ENCODE measurements at regions of chr17 and their contacts with region 1.

Region 1: DNA sequence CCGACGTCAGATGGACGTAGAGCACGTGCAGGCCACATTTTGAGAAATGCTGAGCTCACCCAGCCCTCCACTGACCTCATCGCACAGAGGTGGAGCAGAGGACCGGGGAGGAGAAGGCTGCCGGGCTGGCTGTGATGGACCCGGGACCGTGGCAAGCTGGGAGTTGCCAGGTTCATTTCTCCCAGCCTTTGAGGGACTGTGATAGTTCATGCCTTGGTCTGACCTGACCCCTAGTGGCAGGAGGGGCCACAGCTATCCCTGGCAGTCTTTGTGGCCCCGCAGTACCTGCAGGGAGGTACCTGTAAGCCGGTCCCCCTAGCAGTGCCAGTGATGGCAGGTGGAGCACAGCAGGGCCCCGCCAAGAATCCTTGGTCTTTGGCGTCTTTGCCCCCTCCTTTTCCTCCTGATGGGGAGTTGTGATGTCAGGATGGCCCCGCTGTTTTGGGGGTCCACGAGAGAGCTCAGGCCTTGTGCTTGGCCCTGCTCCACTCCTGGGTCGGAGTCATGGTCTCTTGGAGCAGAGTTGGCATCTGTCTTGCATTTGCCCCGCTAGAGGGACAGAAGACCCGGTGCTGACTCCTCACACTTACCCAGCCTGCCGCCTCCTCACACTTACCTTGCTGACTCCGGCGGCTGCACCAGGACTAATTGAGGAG is 50.4 kb downstream of the OR1D5 start:
- DNase-seq: peak; percentile 58
- ATAC-seq: peak; percentile 98
- H3K4me3 Mint-ChIP-seq: no peak overlapping the region
- H3K27ac Mint-ChIP-seq: no peak overlapping the region
- H3K4me1 Mint-ChIP-seq: no peaks in the 10 kb centered on the region
- H3K27me3 Mint-ChIP-seq: no peaks in the 10 kb centered on the region
- CTCF ChIP-seq: peak; percentile 87

Region 2: GRCh38 chr17:2416010-2416734 is 596.9 kb before region 1 on chr17:
- CTCF ChIA-PET with region 1: interaction called, 9 read pairs
- POLR2A ChIA-PET with region 1: no interaction called
- intact Hi-C with region 1: loop called (anchors 1 kb)
- DNase-seq: peak; percentile 84
- ATAC-seq: peak; percentile 83
- H3K4me3 Mint-ChIP-seq: no peak overlapping the region
- H3K27ac Mint-ChIP-seq: no peak overlapping the region
- H3K4me1 Mint-ChIP-seq: no peaks in the 10 kb centered on the region
- H3K27me3 Mint-ChIP-seq: no peaks in the 10 kb centered on the region
- CTCF ChIP-seq: peak; percentile 47

Region 3: GRCh38 chr17:2828397-2829038 is 184.5 kb before region 1 on chr17:
- CTCF ChIA-PET with region 1: interaction called, 66 read pairs
- POLR2A ChIA-PET with region 1: interaction called, 4 read pairs
- intact Hi-C with region 1: loop called (anchors 1 kb)
- DNase-seq: peak; percentile 84
- ATAC-seq: peak; percentile 84
- H3K4me3 Mint-ChIP-seq: no peak overlapping the region
- H3K27ac Mint-ChIP-seq: no peak overlapping the region
- H3K4me1 Mint-ChIP-seq: peaks cover 42% of the 10 kb centered on the region
- H3K27me3 Mint-ChIP-seq: peaks cover 2% of the 10 kb centered on the region
- CTCF ChIP-seq: peak; percentile 97

Region 4: DNA sequence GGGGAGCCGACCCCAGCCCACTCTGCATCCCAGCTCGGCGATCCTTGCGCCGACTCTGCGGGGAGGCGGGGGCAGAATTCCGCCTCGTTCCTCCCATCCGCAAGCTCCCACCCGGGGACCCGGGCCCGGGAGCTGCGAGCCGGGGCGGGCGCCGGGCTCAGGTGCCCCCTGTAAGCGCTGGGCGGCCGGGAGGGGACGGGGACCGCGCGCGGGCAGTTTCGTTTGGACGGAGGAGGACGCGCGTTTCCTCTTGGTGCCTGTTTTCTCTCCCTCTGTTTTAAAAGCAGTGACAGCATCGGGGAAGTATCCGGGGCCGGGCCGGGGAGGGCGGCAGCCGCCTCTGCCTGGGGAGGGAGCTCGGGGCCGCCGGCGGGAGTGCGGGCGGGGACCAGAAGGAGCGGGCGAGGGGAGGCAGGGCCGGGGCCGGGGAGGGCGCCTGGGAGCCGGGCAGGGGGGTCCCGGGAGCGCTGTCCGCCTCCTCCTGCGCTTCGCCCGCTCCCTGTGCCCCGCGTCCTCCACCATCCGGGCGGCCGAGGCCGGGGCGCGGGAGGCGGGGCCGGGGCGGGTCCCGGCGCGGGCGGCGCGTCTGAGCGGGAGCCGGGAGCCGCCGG is 159.8 kb before region 1 on chr17:
- CTCF ChIA-PET with region 1: interaction called, 85 read pairs
- POLR2A ChIA-PET with region 1: interaction called, 19 read pairs
- intact Hi-C with region 1: loop called (anchors 1 kb)
- DNase-seq: peak; percentile 37
- ATAC-seq: peak; percentile 11
- H3K4me3 Mint-ChIP-seq: peak overlapping the region; percentile 52
- H3K27ac Mint-ChIP-seq: no peak overlapping the region
- H3K4me1 Mint-ChIP-seq: peaks cover 21% of the 10 kb centered on the region
- H3K27me3 Mint-ChIP-seq: peaks cover 42% of the 10 kb centered on the region
- CTCF ChIP-seq: no peak

Region 5: GRCh38 chr17:3389791-3390190 is 376.7 kb after region 1 on chr17:
- CTCF ChIA-PET with region 1: no interaction called
- POLR2A ChIA-PET with region 1: no interaction called
- intact Hi-C with region 1: no loop called
- DNase-seq: no peak
- ATAC-seq: no peak
- H3K4me3 Mint-ChIP-seq: no peak overlapping the region
- H3K27ac Mint-ChIP-seq: no peak overlapping the region
- H3K4me1 Mint-ChIP-seq: no peaks in the 10 kb centered on the region
- H3K27me3 Mint-ChIP-seq: peaks cover 35% of the 10 kb centered on the region
- CTCF ChIP-seq: no peak